ENCODE measurements at regions of chr22 and their contacts with region 1.

Region 1: DNA sequence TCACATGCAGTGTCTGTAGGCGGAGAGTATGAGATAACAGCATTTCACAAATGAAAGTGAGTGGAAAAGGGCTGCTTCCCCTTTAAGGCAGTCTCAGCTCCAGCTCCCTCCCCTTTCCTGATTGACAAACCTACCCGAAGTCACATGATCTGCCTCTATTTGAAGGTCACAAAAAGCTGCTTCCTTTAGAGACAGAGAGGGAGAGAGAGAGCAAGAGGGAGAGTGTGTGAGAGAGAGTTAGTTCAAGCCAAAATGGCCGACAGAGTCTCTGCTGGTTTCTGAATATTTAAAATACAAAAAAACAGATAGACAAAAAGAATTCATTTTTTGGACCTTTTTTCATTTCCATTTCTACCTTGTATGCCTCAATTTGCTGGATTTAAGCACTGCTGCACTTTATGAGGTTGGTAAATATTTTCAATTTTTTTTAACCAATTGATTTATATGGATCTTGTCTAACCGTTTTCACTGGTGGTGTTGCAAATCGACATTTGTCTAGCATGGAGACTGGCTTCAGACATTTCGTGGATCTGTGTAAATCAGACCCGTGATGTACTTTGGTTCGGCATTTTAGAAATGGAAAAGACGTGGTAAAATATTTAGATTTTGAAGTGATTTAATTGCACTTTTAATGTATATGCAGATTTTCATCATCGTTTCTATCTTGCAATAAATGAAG is at the start of gene TNRC6B:
- DNase-seq: peak in 8 of 9 donors; percentile 68 to 95 (median 90)
- ATAC-seq: peak; percentile 98
- H3K4me3 ChIP-seq: peak within 1 kb of the TSS; percentile 72
- H3K4me3 Mint-ChIP-seq: peak within 1 kb of the TSS; percentile 80 to 97 (median 90)
- H3K27ac ChIP-seq: peak within 1 kb of the TSS; percentile 71
- H3K27ac Mint-ChIP-seq: peak within 1 kb of the TSS; percentile 85 to 94 (median 91)
- H3K4me1 ChIP-seq: peaks cover 35 to 44% of the 10 kb centered on the region in 2 donors
- H3K4me1 Mint-ChIP-seq: peaks cover 38 to 77% (median 63%) of the 10 kb centered on the region in 7 donors
- H3K27me3 ChIP-seq: no peaks in the 10 kb centered on the region
- H3K27me3 Mint-ChIP-seq: no peaks in the 10 kb centered on the region
- total RNA-seq, gene TNRC6B: 67.4 to 165 (median 146) TPM

Region 2: GRCh38 chr22:39900306-39901227 is 277.3 kb before region 1 on chr22 and contains the start of gene GRAP2:
- CTCF ChIA-PET with region 1: no interaction called
- POLR2A ChIA-PET with region 1: no interaction called
- intact Hi-C with region 1: loop called in 1 of 2 experiments (anchors 10 kb)
- DNase-seq: peak in 8 of 9 donors; percentile 52 to 90 (median 86)
- ATAC-seq: peak; percentile 98
- H3K4me3 ChIP-seq: peak within 1 kb of the TSS; percentile 71
- H3K4me3 Mint-ChIP-seq: peak within 1 kb of the TSS in 9 of 10 donors; percentile 95 to 99 (median 97)
- H3K27ac ChIP-seq: peak within 1 kb of the TSS; percentile 83
- H3K27ac Mint-ChIP-seq: peak within 1 kb of the TSS in 6 of 9 donors; percentile 86 to 99 (median 96)
- H3K4me1 ChIP-seq: peaks cover 23 to 27% of the 10 kb centered on the region in 2 donors
- H3K4me1 Mint-ChIP-seq: peaks cover 13 to 31% (median 22%) of the 10 kb centered on the region in 7 donors
- H3K27me3 ChIP-seq: no peaks in the 10 kb centered on the region
- H3K27me3 Mint-ChIP-seq: no peaks in the 10 kb centered on the region
- total RNA-seq, gene GRAP2: 108 to 156 (median 145) TPM

Region 3: GRCh38 chr22:40107851-40108378 is 70.0 kb before region 1 on chr22:
- CTCF ChIA-PET with region 1: no interaction called
- POLR2A ChIA-PET with region 1: interaction called, 3 read pairs
- intact Hi-C with region 1: loop called in 1 of 2 experiments (anchors 5 kb)
- DNase-seq: peak in 2 of 9 donors; percentile 19 to 32
- ATAC-seq: peak; percentile 65
- H3K4me3 ChIP-seq: peak overlapping the region; percentile 16
- H3K4me3 Mint-ChIP-seq: peak overlapping the region; percentile 65 to 91 (median 85)
- H3K27ac ChIP-seq: peak overlapping the region; percentile 63
- H3K27ac Mint-ChIP-seq: peak overlapping the region; percentile 36 to 94 (median 83)
- H3K4me1 ChIP-seq: peaks cover 34 to 45% of the 10 kb centered on the region in 2 donors
- H3K4me1 Mint-ChIP-seq: peaks cover 56 to 95% (median 91%) of the 10 kb centered on the region in 7 donors
- H3K27me3 ChIP-seq: no peaks in the 10 kb centered on the region
- H3K27me3 Mint-ChIP-seq: no peaks in the 10 kb centered on the region

Region 4: DNA sequence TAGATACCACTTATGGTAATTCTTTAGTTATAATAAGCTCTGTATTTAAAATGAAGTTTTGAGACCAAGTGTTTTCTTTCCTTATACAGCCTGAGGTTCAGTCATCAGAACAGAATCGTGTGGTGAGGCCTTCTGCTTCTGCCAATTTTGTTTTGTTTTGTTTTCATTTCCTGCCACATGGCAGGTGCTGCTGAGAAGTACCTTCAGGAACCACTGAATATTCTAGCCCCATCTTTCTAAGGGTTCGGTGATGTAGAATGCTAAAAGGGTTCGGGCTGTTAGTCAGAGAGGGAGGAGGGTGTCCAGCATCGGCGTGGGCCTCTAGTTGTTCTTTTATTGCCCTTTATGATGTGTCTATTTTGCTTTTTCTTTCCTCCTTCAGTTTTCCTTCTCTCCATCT is 25.7 kb after region 1 on chr22:
- CTCF ChIA-PET with region 1: interaction called, 3 read pairs
- POLR2A ChIA-PET with region 1: interaction called, 7 read pairs
- intact Hi-C with region 1: loop called (anchors 1 kb)
- DNase-seq: peak in 7 of 9 donors; percentile 46 to 72 (median 60)
- ATAC-seq: peak; percentile 93
- H3K4me3 ChIP-seq: peak overlapping the region; percentile 5
- H3K4me3 Mint-ChIP-seq: peak overlapping the region; percentile 60 to 73 (median 66)
- H3K27ac ChIP-seq: peak overlapping the region; percentile 54
- H3K27ac Mint-ChIP-seq: peak overlapping the region; percentile 74 to 95 (median 85)
- H3K4me1 ChIP-seq: peaks cover 24 to 49% of the 10 kb centered on the region in 2 donors
- H3K4me1 Mint-ChIP-seq: peaks cover 50 to 88% (median 79%) of the 10 kb centered on the region in 7 donors
- H3K27me3 ChIP-seq: no peaks in the 10 kb centered on the region
- H3K27me3 Mint-ChIP-seq: no peaks in the 10 kb centered on the region

Region 5: GRCh38 chr22:40276996-40277823 is 99.3 kb after region 1 on chr22:
- CTCF ChIA-PET with region 1: no interaction called
- POLR2A ChIA-PET with region 1: no interaction called
- intact Hi-C with region 1: loop called in 1 of 2 experiments (anchors 5 kb)
- DNase-seq: no peak
- ATAC-seq: no peak
- H3K4me3 ChIP-seq: peak overlapping the region; percentile 40
- H3K4me3 Mint-ChIP-seq: peak overlapping the region in 6 of 10 donors; percentile 1 to 88 (median 64)
- H3K27ac ChIP-seq: peak overlapping the region; percentile 82
- H3K27ac Mint-ChIP-seq: peak overlapping the region; percentile 57 to 97 (median 89)
- H3K4me1 ChIP-seq: peaks cover 0 to 35% of the 10 kb centered on the region in 2 donors
- H3K4me1 Mint-ChIP-seq: peaks cover 23 to 89% (median 69%) of the 10 kb centered on the region in 7 donors
- H3K27me3 ChIP-seq: no peaks in the 10 kb centered on the region
- H3K27me3 Mint-ChIP-seq: no peaks in the 10 kb centered on the region

Region 6: DNA sequence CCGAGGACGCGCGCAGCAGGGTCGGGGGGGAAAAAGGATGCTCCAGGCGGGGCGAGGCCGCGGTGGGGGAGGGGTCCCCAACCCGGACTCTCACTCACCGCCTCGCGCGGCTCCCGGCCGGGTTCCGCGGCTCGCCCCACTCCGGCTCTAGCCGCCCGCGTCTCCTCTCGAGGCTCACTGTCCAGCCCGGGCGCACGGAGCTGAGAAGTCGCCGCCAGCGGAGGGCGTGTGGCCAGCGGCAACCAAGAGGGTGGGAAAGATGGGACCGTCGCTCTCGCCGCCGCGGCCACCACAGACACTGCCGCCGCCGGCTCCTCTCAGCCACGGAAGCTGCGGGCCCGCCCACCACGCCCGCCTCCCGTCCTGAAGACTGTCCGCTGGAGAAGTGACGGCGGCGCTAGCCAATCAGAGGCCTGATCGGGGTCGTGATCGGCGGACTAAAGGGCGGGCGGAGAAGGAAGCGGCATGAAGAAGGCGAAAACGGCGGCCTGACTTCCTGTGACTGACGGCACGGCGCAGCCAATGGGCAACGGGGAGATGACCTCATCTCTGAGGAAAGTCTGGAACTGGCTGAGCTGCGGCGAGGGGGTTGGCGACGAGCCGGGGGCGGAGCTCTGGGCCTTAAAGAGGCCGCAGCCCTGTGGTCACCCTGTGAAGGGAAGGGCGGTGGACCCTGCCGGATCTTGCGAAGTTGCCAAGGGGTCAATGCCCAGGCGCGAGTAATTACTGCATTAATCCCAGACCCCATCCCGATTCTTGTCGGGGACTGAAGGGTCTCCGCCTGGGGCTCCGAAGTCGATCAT is 458.7 kb after region 1 on chr22 and contains the start of gene MRTFA:
- CTCF ChIA-PET with region 1: no interaction called
- POLR2A ChIA-PET with region 1: no interaction called
- intact Hi-C with region 1: loop called (anchors 2 kb)
- DNase-seq: peak; percentile 90 to 99 (median 98)
- ATAC-seq: peak; percentile 96
- H3K4me3 ChIP-seq: peak within 1 kb of the TSS; percentile 84
- H3K4me3 Mint-ChIP-seq: peak within 1 kb of the TSS; percentile 94 to 100 (median 97)
- H3K27ac ChIP-seq: peak within 1 kb of the TSS; percentile 85
- H3K27ac Mint-ChIP-seq: peak within 1 kb of the TSS; percentile 96 to 99 (median 97)
- H3K4me1 ChIP-seq: peaks cover 14 to 27% of the 10 kb centered on the region in 2 donors
- H3K4me1 Mint-ChIP-seq: peaks cover 27 to 56% (median 44%) of the 10 kb centered on the region in 7 donors
- H3K27me3 ChIP-seq: no peaks in the 10 kb centered on the region
- H3K27me3 Mint-ChIP-seq: no peaks in the 10 kb centered on the region
- total RNA-seq, gene MRTFA: 64.0 to 114 (median 104) TPM

Region 7: DNA sequence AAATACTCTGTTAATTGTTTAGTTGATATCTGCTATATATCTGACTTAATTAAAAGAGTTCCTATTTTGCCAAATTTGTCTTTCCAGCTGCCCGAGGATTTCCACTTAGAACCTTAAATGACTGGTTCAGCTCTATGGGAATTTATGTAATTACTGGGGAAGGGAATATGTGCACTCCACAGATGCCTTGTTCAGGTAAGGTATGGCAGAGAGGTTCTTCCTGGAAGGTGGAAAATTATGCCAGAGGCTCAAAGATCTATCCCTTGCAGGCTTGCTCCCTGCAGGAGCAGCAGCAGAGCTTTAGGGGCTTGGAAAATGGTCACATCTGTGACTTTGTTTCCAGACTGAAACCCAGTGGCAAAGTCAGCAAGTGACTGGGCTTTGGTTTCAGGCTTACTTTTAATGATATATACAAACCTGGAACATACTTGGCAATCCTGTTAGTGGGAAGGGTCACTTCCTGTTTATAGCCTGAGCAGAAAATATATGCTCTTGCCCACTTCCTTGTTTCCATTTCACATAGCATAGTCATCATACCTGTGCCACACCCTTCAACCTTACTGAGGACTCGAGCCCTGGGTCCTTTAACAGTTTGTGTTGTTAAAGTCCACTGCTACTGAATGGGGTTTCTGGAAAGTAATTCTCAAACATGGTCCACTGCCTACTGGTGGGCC is 1844.4 kb after region 1 on chr22:
- CTCF ChIA-PET with region 1: no interaction called
- POLR2A ChIA-PET with region 1: no interaction called
- intact Hi-C with region 1: no loop called
- DNase-seq: no peak
- ATAC-seq: no peak
- H3K4me3 ChIP-seq: no peak overlapping the region
- H3K4me3 Mint-ChIP-seq: peak overlapping the region in 3 of 10 donors; percentile 18 to 51 (median 34)
- H3K27ac ChIP-seq: no peak overlapping the region
- H3K27ac Mint-ChIP-seq: peak overlapping the region in 3 of 9 donors; percentile 23 to 85 (median 30)
- H3K4me1 ChIP-seq: peaks cover 6% of the 10 kb centered on the region in 2 donors
- H3K4me1 Mint-ChIP-seq: peaks cover 0 to 29% (median 13%) of the 10 kb centered on the region in 7 donors
- H3K27me3 ChIP-seq: no peaks in the 10 kb centered on the region
- H3K27me3 Mint-ChIP-seq: peaks cover 0 to 15% (median 4%) of the 10 kb centered on the region in 5 donors

Measured in naive thymus-derived CD4-positive, alpha-beta T cell (primary cell).